HepG2 (cell line): ENCODE measurements at regions of chr1 and their contacts with region 1.

Region 1: GRCh38 chr1:94962409-94963265 is 35.7 kb upstream of the CNN3 start:
- DNase-seq: peak; percentile 85
- ATAC-seq: peak; percentile 96
- H3K4me3 ChIP-seq: peak overlapping the region; percentile 42 to 57 (median 45); a peak in 4 of 6 replicates
- H3K27ac ChIP-seq: peak overlapping the region; percentile 96
- H3K4me1 ChIP-seq: peaks cover 55% of the 10 kb centered on the region
- H3K27me3 ChIP-seq: no peaks in the 10 kb centered on the region
- CTCF ChIP-seq: no peak
- EP300 ChIP-seq: peak in 1 of 2 experiments; percentile 92; a peak in 2 of 4 replicates
- POLR2A ChIP-seq: peak in 1 of 2 experiments; percentile 47; a peak in 1 of 4 replicates
- RAD21 ChIP-seq: no peak

Region 2: GRCh38 chr1:94983171-94983739 is 20.6 kb after region 1 on chr1:
- CTCF ChIA-PET with region 1: no interaction called
- POLR2A ChIA-PET with region 1: interaction called, 3 read pairs
- in situ Hi-C with region 1: no loop called
- intact Hi-C with region 1: loop called (anchors 2 kb)
- DNase-seq: no peak
- ATAC-seq: peak; percentile 49; the same call in 2 of the 3 replicates
- H3K4me3 ChIP-seq: no peak overlapping the region
- H3K27ac ChIP-seq: peak overlapping the region; percentile 20
- H3K4me1 ChIP-seq: peaks cover 63% of the 10 kb centered on the region
- H3K27me3 ChIP-seq: no peaks in the 10 kb centered on the region
- CTCF ChIP-seq: no peak
- EP300 ChIP-seq: no peak
- POLR2A ChIP-seq: no peak
- RAD21 ChIP-seq: no peak